Activated CD8-positive, alpha-beta T cell treated with anti-CD3 and anti-CD28 coated beads for 36 hours (primary cell): ENCODE measurements at regions of chr9 and their contacts with region 1.

Region 1: GRCh38 chr9:126490871-126491567 is 122.7 kb upstream of the LMX1B start:
- DNase-seq: peak; percentile 66
- ATAC-seq: peak; percentile 70
- H3K4me3 Mint-ChIP-seq: no peak overlapping the region
- H3K27ac Mint-ChIP-seq: no peak overlapping the region
- H3K4me1 Mint-ChIP-seq: peaks cover 11% of the 10 kb centered on the region
- H3K27me3 Mint-ChIP-seq: no peaks in the 10 kb centered on the region
- CTCF ChIP-seq: peak; percentile 97

Region 2: DNA sequence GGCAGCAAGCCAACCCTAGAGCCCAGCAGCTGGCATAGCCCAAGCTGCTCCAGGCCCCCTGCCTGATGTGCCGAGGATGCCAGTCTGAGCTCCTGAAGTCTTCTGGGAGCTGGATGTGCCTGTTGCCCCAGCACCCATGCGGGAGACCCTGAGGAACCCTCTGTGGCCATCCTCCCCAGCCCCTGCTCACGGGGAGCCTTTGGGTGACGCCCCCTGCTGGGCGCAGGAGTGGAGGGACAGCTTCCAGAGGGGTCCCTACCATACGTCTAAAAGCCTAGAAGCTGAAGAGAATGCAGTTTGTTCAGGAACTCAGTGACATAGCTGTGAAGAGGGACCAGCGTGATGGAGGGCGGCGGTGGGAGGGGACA is 197.5 kb before region 1 on chr9:
- CTCF ChIA-PET with region 1: interaction called, 13 read pairs
- POLR2A ChIA-PET with region 1: no interaction called
- intact Hi-C with region 1: no loop called
- DNase-seq: peak; percentile 20
- ATAC-seq: no peak
- H3K4me3 Mint-ChIP-seq: no peak overlapping the region
- H3K27ac Mint-ChIP-seq: no peak overlapping the region
- H3K4me1 Mint-ChIP-seq: no peaks in the 10 kb centered on the region
- H3K27me3 Mint-ChIP-seq: peaks cover 3% of the 10 kb centered on the region
- CTCF ChIP-seq: peak; percentile 32

Region 3: DNA sequence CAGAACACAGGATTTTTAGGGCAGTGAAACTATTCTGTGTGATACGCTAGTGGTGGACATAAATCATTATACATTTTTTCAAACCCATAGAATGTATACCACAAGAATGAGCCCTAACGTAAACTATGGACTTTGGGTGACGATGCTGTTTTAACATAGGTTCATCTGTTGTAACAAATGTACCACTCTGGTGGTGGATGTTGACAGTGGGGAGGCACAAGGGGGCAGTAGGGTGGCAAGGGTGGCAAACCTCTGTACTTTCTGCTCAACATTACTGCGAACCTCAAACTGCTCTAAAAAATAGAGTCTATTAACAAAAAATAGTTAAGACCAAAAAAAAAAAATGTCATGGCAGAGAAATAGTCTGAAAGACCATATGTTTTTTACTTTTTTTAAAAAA is 173.5 kb before region 1 on chr9:
- CTCF ChIA-PET with region 1: interaction called, 70 read pairs
- POLR2A ChIA-PET with region 1: no interaction called
- intact Hi-C with region 1: loop called (anchors 5 kb)
- DNase-seq: peak; percentile 55
- ATAC-seq: peak; percentile 69
- H3K4me3 Mint-ChIP-seq: no peak overlapping the region
- H3K27ac Mint-ChIP-seq: no peak overlapping the region
- H3K4me1 Mint-ChIP-seq: peaks cover 4% of the 10 kb centered on the region
- H3K27me3 Mint-ChIP-seq: no peaks in the 10 kb centered on the region
- CTCF ChIP-seq: peak; percentile 40

Region 4: GRCh38 chr9:126392662-126393371 is 98.2 kb before region 1 on chr9:
- CTCF ChIA-PET with region 1: interaction called, 58 read pairs
- POLR2A ChIA-PET with region 1: no interaction called
- intact Hi-C with region 1: loop called (anchors 5 kb)
- DNase-seq: no peak
- ATAC-seq: no peak
- H3K4me3 Mint-ChIP-seq: no peak overlapping the region
- H3K27ac Mint-ChIP-seq: no peak overlapping the region
- H3K4me1 Mint-ChIP-seq: peaks cover 43% of the 10 kb centered on the region
- H3K27me3 Mint-ChIP-seq: no peaks in the 10 kb centered on the region
- CTCF ChIP-seq: no peak

Region 5: DNA sequence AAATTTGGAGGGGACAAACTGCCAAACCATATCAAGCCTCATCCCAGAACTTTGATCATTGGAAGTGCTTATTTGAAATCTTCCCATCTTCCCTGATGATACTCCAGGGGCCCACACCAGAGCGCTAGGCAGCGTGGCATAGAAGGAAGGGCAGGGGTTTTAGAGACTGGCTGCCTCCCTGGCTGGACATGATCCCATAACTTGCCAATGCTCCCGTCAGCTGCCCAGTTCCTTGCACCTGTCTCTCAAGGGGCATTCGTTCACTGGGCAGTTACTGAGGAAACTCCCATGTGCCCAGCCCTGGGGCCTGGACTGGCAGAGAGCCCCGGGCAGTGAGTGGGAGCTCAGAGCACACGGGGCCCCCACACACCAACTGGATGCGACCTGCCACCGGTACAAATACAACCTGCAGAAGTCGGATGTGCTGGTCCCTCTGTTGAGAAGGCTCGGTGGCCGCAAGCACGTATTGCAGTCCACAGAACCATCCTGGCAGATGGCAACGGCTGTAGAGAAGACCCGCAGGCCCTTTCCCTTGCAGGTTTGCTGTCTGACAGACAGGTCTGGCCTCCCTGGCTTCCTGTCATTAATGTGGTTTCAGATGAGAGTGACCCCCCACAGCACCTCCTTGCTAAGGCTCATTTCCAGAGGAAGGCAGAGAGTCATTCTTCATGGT is 42.0 kb before region 1 on chr9:
- CTCF ChIA-PET with region 1: interaction called, 11 read pairs
- POLR2A ChIA-PET with region 1: no interaction called
- intact Hi-C with region 1: no loop called
- DNase-seq: no peak
- ATAC-seq: no peak
- H3K4me3 Mint-ChIP-seq: no peak overlapping the region
- H3K27ac Mint-ChIP-seq: no peak overlapping the region
- H3K4me1 Mint-ChIP-seq: peaks cover 14% of the 10 kb centered on the region
- H3K27me3 Mint-ChIP-seq: no peaks in the 10 kb centered on the region
- CTCF ChIP-seq: no peak

Region 6: DNA sequence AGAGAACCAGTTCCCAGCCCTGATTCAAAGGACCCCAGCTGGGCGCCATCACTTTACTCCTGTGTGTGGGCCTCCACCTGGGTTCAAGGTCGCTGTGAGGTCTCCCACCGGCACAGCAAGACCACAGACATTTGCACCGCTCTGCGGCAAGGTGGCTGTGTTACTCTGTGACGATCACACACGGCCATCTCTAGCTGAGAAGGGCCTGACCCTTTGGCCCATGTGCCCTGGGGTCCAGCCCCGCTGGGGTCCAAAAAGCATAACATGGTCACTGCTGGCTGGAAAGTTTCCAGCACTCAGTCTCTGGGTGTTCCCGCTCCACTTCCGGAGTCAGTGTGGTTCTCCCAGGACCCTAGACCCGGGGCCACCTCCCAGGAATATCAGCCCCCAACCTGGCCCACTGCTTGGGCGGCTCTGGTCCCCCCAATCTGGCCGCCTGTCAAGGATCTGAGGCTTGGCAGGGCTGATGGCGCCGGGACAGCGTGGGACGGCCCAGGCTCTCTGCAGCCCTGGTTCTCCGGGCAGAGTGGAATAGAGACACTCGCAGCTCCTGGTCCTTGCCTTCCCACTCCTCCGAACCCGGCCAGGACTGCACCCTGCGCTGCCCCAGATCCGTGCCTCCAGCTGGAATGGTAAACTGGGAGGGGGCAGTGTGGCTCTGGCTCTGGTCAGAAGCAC is 118.8 kb after region 1 on chr9:
- CTCF ChIA-PET with region 1: no interaction called
- POLR2A ChIA-PET with region 1: no interaction called
- intact Hi-C with region 1: no loop called
- DNase-seq: no peak
- ATAC-seq: no peak
- H3K4me3 Mint-ChIP-seq: no peak overlapping the region
- H3K27ac Mint-ChIP-seq: no peak overlapping the region
- H3K4me1 Mint-ChIP-seq: peaks cover 19% of the 10 kb centered on the region
- H3K27me3 Mint-ChIP-seq: peaks cover 60% of the 10 kb centered on the region
- CTCF ChIP-seq: no peak